ENCODE measurements at regions of chr17 and their contacts with region 1.

Region 1: GRCh38 chr17:57604771-57605674 is 140.1 kb downstream of the CCDC182 start:
- DNase-seq: peak in 1 of 2 donors; percentile 67
- ATAC-seq: peak; percentile 37 to 70 (median 48)
- H3K4me3 ChIP-seq: peak overlapping the region; percentile 22
- H3K27ac ChIP-seq: peak overlapping the region; percentile 83
- H3K4me1 ChIP-seq: peaks cover 40% of the 10 kb centered on the region
- H3K27me3 ChIP-seq: no peaks in the 10 kb centered on the region
- CTCF ChIP-seq: no peak

Region 2: GRCh38 chr17:57499648-57500049 is 105.4 kb before region 1 on chr17:
- intact Hi-C with region 1: no loop called
- DNase-seq: no peak
- ATAC-seq: peak in 1 of 4 donors; percentile 40
- H3K4me3 ChIP-seq: no peak overlapping the region
- H3K27ac ChIP-seq: no peak overlapping the region
- H3K4me1 ChIP-seq: peaks cover 21% of the 10 kb centered on the region
- H3K27me3 ChIP-seq: no peaks in the 10 kb centered on the region
- CTCF ChIP-seq: no peak

Region 3: GRCh38 chr17:57662644-57663308 is 57.8 kb after region 1 on chr17:
- intact Hi-C with region 1: loop called in 1 of 2 experiments (anchors 5 kb)
- DNase-seq: peak; percentile 97
- ATAC-seq: peak; percentile 97 to 98 (median 97)
- H3K4me3 ChIP-seq: peak overlapping the region; percentile 45
- H3K27ac ChIP-seq: peak overlapping the region; percentile 85
- H3K4me1 ChIP-seq: peaks cover 26% of the 10 kb centered on the region
- H3K27me3 ChIP-seq: no peaks in the 10 kb centered on the region
- CTCF ChIP-seq: peak; percentile 9

Region 4: GRCh38 chr17:57707851-57708291 is 102.8 kb after region 1 on chr17:
- intact Hi-C with region 1: no loop called
- DNase-seq: peak; percentile 22 to 69
- ATAC-seq: peak; percentile 76 to 94 (median 88)
- H3K4me3 ChIP-seq: no peak overlapping the region
- H3K27ac ChIP-seq: peak overlapping the region; percentile 47
- H3K4me1 ChIP-seq: peaks cover 13% of the 10 kb centered on the region
- H3K27me3 ChIP-seq: no peaks in the 10 kb centered on the region
- CTCF ChIP-seq: no peak

Region 5: GRCh38 chr17:57833179-57833939 is 228.3 kb after region 1 on chr17:
- intact Hi-C with region 1: loop called in 1 of 2 experiments (anchors 10 kb)
- DNase-seq: peak; percentile 67 to 82
- ATAC-seq: peak; percentile 68 to 83 (median 81)
- H3K4me3 ChIP-seq: peak overlapping the region; percentile 60
- H3K27ac ChIP-seq: peak overlapping the region; percentile 68
- H3K4me1 ChIP-seq: peaks cover 38% of the 10 kb centered on the region
- H3K27me3 ChIP-seq: no peaks in the 10 kb centered on the region
- CTCF ChIP-seq: peak; percentile 93

Measured in psoas muscle (tissue), 8 donors.